ENCODE measurements at regions of chr9 and their contacts with region 1.

Region 1: DNA sequence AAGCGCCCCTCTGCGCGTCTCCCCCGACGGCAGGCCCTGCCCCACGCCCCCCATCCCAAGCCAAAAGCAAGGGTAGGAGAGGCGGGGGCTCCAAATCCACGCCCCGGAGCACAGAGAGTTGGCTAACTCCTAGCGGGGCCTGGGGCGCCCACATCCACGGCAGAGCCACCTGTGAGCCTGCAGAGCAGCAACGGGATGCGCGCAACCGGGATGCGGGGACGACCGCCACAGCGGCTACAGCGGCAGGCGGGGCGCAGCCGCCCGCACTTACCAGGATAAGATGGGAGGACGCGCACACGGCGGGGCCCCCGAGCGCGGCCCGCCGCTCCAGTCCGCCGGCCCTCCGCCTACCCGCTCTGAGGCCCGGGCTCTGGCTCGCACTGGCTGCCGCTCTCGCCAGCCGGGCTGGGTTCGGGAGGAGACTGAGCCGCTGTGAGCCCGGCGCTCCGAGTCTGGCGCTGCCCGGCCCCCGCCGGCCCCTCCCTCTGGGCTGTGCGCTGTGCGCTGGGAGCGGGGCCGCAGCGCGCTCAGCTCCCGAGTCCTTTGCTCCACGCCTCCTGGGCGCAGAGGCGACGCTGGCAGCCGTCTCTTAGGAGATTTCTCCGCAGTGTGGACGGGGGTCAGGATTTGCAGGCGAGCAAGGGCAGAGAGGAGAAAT is at the start of gene SLC24A2:
- DNase-seq: no peak
- H3K4me3 ChIP-seq: no peak within 1 kb of the TSS
- H3K4me3 Mint-ChIP-seq: no peak within 1 kb of the TSS
- H3K27ac Mint-ChIP-seq: no peak within 1 kb of the TSS
- H3K4me1 ChIP-seq: no peaks in the 10 kb centered on the region
- H3K4me1 Mint-ChIP-seq: no peaks in the 10 kb centered on the region
- H3K27me3 ChIP-seq: no peaks in the 10 kb centered on the region
- H3K27me3 Mint-ChIP-seq: no peaks in the 10 kb centered on the region
- CTCF ChIP-seq: no peak
- total RNA-seq, gene SLC24A2: 0.07 TPM in 1 of 2 replicates, not detected in the other

Region 2: GRCh38 chr9:19102631-19103345 is 686.0 kb before region 1 on chr9 and contains the start of gene HAUS6:
- CTCF ChIA-PET with region 1: no interaction called
- POLR2A ChIA-PET with region 1: interaction called, 10 read pairs
- intact Hi-C with region 1: no loop called
- DNase-seq: peak; percentile 91 to 95
- H3K4me3 ChIP-seq: peak within 1 kb of the TSS; percentile 75
- H3K4me3 Mint-ChIP-seq: peak within 1 kb of the TSS; percentile 86
- H3K27ac Mint-ChIP-seq: peak within 1 kb of the TSS; percentile 79
- H3K4me1 ChIP-seq: no peaks in the 10 kb centered on the region
- H3K4me1 Mint-ChIP-seq: peaks cover 7% of the 10 kb centered on the region
- H3K27me3 ChIP-seq: no peaks in the 10 kb centered on the region
- H3K27me3 Mint-ChIP-seq: no peaks in the 10 kb centered on the region
- CTCF ChIP-seq: peak in 1 of 2 experiments; percentile 29
- total RNA-seq, gene HAUS6: 15.0 and 15.2 TPM in 2 replicates

Region 3: DNA sequence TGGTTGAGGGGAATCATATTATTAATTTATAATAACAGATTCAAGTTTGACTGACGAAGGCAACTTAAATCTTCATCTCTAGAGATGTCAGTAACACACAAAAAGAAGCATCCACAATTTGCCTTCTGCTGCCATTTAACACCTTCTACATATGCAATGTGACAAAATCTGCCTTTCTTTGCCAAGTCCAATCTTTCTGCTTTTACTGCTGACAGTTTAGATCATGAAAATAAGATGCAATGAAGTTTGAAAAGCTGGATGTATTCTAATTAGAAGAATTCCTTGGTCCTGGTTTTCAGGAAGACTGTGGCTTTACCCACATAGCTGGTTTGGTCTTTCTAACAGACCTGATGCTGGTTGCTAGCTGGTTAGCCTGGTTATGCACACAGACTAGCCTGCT is 201.1 kb before region 1 on chr9:
- CTCF ChIA-PET with region 1: no interaction called
- POLR2A ChIA-PET with region 1: no interaction called
- intact Hi-C with region 1: no loop called
- DNase-seq: no peak
- H3K4me3 ChIP-seq: no peak overlapping the region
- H3K4me3 Mint-ChIP-seq: no peak overlapping the region
- H3K27ac Mint-ChIP-seq: no peak overlapping the region
- H3K4me1 ChIP-seq: no peaks in the 10 kb centered on the region
- H3K4me1 Mint-ChIP-seq: no peaks in the 10 kb centered on the region
- H3K27me3 ChIP-seq: no peaks in the 10 kb centered on the region
- H3K27me3 Mint-ChIP-seq: peaks cover 11% of the 10 kb centered on the region
- CTCF ChIP-seq: no peak